ENCODE measurements at regions of chr14 and their contacts with region 1.

Region 1: GRCh38 chr14:67619446-67620216 is at the start of gene ARG2:
- DNase-seq: peak; percentile 98 to 100
- ATAC-seq: peak; percentile 99
- H3K4me3 ChIP-seq: peak within 1 kb of the TSS; percentile 29 to 42
- H3K27ac ChIP-seq: peak within 1 kb of the TSS in 1 of 2 donors; percentile 66
- H3K4me1 ChIP-seq: peaks cover 0 to 2% of the 10 kb centered on the region in 2 donors
- H3K27me3 ChIP-seq: no peaks in the 10 kb centered on the region
- total RNA-seq, gene ARG2: 4.1 to 8.5 TPM

Region 2: GRCh38 chr14:66965831-66966230 is 653.8 kb before region 1 on chr14:
- intact Hi-C with region 1: no loop called
- DNase-seq: no peak
- ATAC-seq: no peak
- H3K4me3 ChIP-seq: no peak overlapping the region
- H3K27ac ChIP-seq: no peak overlapping the region
- H3K4me1 ChIP-seq: no peaks in the 10 kb centered on the region
- H3K27me3 ChIP-seq: no peaks in the 10 kb centered on the region

Region 3: GRCh38 chr14:67359775-67360648 is 259.6 kb before region 1 on chr14 and contains the starts of genes ATP6V1D and EIF2S1:
- intact Hi-C with region 1: no loop called
- DNase-seq: peak; percentile 100
- ATAC-seq: peak; percentile 100
- H3K4me3 ChIP-seq: peak within 1 kb of the TSS; percentile 87 to 98
- H3K27ac ChIP-seq: peak within 1 kb of the TSS in 1 of 2 donors; percentile 78
- H3K4me1 ChIP-seq: peaks cover 0 to 5% of the 10 kb centered on the region in 2 donors
- H3K27me3 ChIP-seq: no peaks in the 10 kb centered on the region
- total RNA-seq, gene ATP6V1D: 47.7 to 50.3 TPM
- total RNA-seq, gene EIF2S1: 56.8 to 61.4 TPM

Region 4: GRCh38 chr14:67586369-67586768 is 33.3 kb before region 1 on chr14:
- intact Hi-C with region 1: no loop called
- DNase-seq: no peak
- ATAC-seq: no peak
- H3K4me3 ChIP-seq: no peak overlapping the region
- H3K27ac ChIP-seq: no peak overlapping the region
- H3K4me1 ChIP-seq: no peaks in the 10 kb centered on the region
- H3K27me3 ChIP-seq: no peaks in the 10 kb centered on the region

Region 5: DNA sequence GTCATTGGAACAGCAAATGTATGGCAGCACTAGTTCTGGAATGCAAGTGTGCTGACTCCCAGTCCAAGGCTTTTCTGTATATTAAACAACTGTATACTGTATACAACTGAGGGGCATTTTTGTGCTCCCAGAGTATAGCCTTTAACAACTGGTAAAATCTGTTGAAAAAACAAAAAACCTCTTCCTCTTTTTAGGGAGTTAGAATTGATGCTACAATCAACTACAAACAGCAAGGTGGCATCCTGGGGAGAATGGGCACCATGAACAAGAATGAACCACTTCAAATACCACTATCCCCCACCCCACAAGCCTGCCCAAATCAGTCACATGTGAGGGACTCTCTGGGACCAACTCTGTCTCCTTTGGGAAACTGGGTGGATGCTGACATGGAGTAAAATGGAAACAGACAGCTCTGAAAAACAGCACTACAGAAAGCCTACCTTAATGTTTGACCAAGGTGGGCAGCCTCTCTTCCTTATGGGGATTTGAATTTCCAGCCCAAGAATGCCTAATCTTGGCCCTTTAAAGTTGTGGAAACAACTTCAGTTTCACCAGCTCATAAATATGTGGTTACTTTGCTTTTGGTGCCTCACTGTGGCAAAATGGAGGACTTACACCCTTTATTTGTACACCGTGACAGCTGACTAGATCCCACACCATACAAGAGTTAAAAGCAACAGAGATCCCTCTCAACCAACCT is 47.3 kb after region 1 on chr14:
- intact Hi-C with region 1: loop called (anchors 2 kb)
- DNase-seq: no peak
- ATAC-seq: peak; percentile 72
- H3K4me3 ChIP-seq: no peak overlapping the region
- H3K27ac ChIP-seq: no peak overlapping the region
- H3K4me1 ChIP-seq: no peaks in the 10 kb centered on the region
- H3K27me3 ChIP-seq: no peaks in the 10 kb centered on the region

Region 6: GRCh38 chr14:67674481-67675169 is 55.0 kb after region 1 on chr14 and contains the start of gene VTI1B:
- intact Hi-C with region 1: loop called in 1 of 2 experiments (anchors 2 kb)
- DNase-seq: peak; percentile 89 to 94
- ATAC-seq: peak; percentile 97
- H3K4me3 ChIP-seq: peak within 1 kb of the TSS; percentile 54 to 98
- H3K27ac ChIP-seq: peak within 1 kb of the TSS; percentile 83 to 96
- H3K4me1 ChIP-seq: peaks cover 0 to 1% of the 10 kb centered on the region in 2 donors
- H3K27me3 ChIP-seq: no peaks in the 10 kb centered on the region
- total RNA-seq, gene VTI1B: 94.0 to 95.4 TPM